K562 (cell line): ENCODE measurements at regions of chr17 and their contacts with region 1.

Region 1: GRCh38 chr17:33871720-33872540 is 383.2 kb upstream of the CCL2 start:
- DNase-seq: peak; percentile 88 to 96 (median 90)
- ATAC-seq: peak; percentile 94
- H3K4me3 ChIP-seq: no peak overlapping the region
- H3K27ac ChIP-seq: peak overlapping the region; percentile 90
- H3K4me1 ChIP-seq: peaks cover 37 to 72% of the 10 kb centered on the region in 2 experiments
- H3K27me3 ChIP-seq: no peaks in the 10 kb centered on the region
- CTCF ChIP-seq: no peak
- EP300 ChIP-seq: peak; percentile 93
- POLR2A ChIP-seq: 0 out of 2 replicates have a peak, but pooled peaks have one; percentile 30
- RAD21 ChIP-seq: peak in 1 of 2 experiments; percentile 42; a peak in 2 of 4 replicates

Region 2: GRCh38 chr17:33725675-33726271 is 146.2 kb before region 1 on chr17:
- CTCF ChIA-PET with region 1: no interaction called
- POLR2A ChIA-PET with region 1: no interaction called
- in situ Hi-C with region 1: no loop called
- intact Hi-C with region 1: no loop called
- DNase-seq: peak; percentile 66 to 75 (median 67)
- ATAC-seq: peak; percentile 85
- H3K4me3 ChIP-seq: no peak overlapping the region
- H3K27ac ChIP-seq: no peak overlapping the region
- H3K4me1 ChIP-seq: no peaks in the 10 kb centered on the region
- H3K27me3 ChIP-seq: peaks cover 0 to 7% of the 10 kb centered on the region in 2 experiments; a peak in 1 of 5 replicates
- CTCF ChIP-seq: peak; percentile 82 to 84 (median 83)
- EP300 ChIP-seq: no peak
- POLR2A ChIP-seq: no peak
- RAD21 ChIP-seq: peak; percentile 55 to 71

Region 3: DNA sequence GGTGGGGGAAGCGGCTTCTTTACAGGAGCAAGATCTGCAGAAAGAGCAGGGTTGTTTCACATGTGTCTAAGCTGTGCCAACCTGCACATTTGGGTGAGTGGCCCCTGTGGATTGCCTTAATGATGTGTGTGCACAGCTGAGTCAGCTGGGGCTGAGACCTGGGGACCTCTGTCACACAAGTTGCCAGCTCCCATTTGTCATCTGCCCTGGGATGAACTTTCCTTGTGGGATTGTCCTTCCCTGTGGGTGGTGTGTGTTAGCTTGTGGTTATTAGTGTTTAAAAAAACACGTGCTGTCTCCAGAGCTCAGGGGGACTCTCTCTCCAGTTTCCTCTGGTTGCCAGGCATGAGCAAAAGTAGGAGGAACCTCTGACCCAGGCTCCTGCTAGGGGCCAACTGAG is 17.3 kb before region 1 on chr17:
- CTCF ChIA-PET with region 1: no interaction called
- POLR2A ChIA-PET with region 1: interaction called, 10 read pairs
- in situ Hi-C with region 1: no loop called
- intact Hi-C with region 1: no loop called
- DNase-seq: no peak
- ATAC-seq: no peak
- H3K4me3 ChIP-seq: no peak overlapping the region
- H3K27ac ChIP-seq: no peak overlapping the region
- H3K4me1 ChIP-seq: peaks cover 0 to 13% of the 10 kb centered on the region in 2 experiments; a peak in 3 of 5 replicates
- H3K27me3 ChIP-seq: peaks cover 7 to 9% of the 10 kb centered on the region in 2 experiments; a peak in 3 of 5 replicates
- CTCF ChIP-seq: no peak
- EP300 ChIP-seq: no peak
- POLR2A ChIP-seq: no peak
- RAD21 ChIP-seq: no peak

Region 4: DNA sequence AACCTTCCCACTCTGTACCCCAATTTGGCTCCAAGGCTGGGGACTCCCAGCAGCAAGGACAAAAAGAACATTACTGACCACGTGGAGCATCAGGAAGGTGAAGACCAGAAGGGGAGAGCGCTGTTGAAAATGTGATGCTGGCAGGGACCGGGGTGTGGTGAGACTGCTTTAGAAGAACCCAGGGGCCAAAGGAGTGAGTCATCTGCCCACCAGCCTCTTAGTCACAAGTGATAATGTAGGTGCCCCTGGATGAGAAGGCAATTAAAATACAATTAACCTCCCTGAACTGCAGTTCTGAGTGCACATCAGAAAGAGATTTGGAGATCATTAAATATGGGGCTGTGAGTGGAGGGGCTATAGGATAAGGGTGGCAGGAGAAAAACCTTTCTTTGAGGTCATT is 16.5 kb after region 1 on chr17:
- CTCF ChIA-PET with region 1: no interaction called
- POLR2A ChIA-PET with region 1: interaction called, 10 read pairs
- in situ Hi-C with region 1: no loop called
- intact Hi-C with region 1: loop called (anchors 2 kb)
- DNase-seq: peak; percentile 54 to 61 (median 55)
- ATAC-seq: no peak; the same call in 2 of the 3 replicates
- H3K4me3 ChIP-seq: no peak overlapping the region
- H3K27ac ChIP-seq: peak overlapping the region; percentile 65
- H3K4me1 ChIP-seq: peaks cover 22 to 58% of the 10 kb centered on the region in 2 experiments; a peak in 4 of 5 replicates
- H3K27me3 ChIP-seq: no peaks in the 10 kb centered on the region
- CTCF ChIP-seq: no peak
- EP300 ChIP-seq: no peak
- POLR2A ChIP-seq: no peak
- RAD21 ChIP-seq: no peak

Region 5: DNA sequence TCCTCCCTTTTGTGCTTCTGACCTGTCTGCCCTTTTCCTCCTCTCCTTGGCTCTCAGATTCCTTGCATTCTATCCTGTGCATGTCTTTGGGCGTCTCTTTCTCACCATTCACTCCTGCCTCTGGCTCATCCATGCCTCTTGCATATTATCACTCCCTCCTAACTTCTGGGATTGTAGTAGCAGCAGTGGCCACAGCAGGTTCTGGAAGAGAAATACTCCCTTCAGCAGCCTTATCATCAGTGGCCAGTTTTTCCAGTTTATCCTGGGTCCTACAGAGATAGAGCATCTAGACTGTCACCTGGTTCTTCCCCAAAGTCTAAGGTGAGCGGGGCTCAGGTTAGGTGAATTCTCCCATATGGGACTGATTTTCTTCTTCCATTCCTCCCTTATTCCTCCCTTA is 29.2 kb after region 1 on chr17:
- CTCF ChIA-PET with region 1: no interaction called
- POLR2A ChIA-PET with region 1: interaction called, 5 read pairs
- in situ Hi-C with region 1: no loop called
- intact Hi-C with region 1: loop called (anchors 1 kb)
- DNase-seq: peak in 1 of 4 experiments; percentile 26
- ATAC-seq: no peak
- H3K4me3 ChIP-seq: no peak overlapping the region
- H3K27ac ChIP-seq: no peak overlapping the region
- H3K4me1 ChIP-seq: peaks cover 34 to 63% of the 10 kb centered on the region in 2 experiments; a peak in 4 of 5 replicates
- H3K27me3 ChIP-seq: no peaks in the 10 kb centered on the region
- CTCF ChIP-seq: no peak
- EP300 ChIP-seq: peak; percentile 23; the same call in 1 of the 2 replicates
- POLR2A ChIP-seq: no peak
- RAD21 ChIP-seq: no peak

Region 6: DNA sequence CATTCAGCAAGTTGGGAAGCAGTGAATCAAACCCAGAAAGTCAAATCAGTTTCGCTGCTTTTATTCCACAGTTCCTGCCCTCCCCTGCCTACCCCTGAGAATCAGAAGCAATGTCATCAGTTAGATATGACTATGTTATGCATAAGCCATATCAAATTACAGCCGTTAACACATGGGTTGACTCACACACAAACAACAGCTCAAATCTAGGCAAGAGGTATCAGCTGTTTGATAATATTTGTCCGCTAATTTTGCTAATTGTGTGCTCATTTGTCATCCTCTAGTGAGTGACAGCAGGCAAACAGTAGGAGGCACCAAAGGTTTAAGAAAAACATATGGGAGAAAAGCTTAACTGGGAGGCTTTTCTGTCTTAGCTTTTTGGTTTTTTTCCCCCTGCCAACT is 55.8 kb after region 1 on chr17:
- CTCF ChIA-PET with region 1: no interaction called
- POLR2A ChIA-PET with region 1: no interaction called
- in situ Hi-C with region 1: no loop called
- intact Hi-C with region 1: loop called (anchors 5 kb)
- DNase-seq: peak; percentile 47 to 57 (median 52)
- ATAC-seq: peak; percentile 41; the same call in 2 of the 3 replicates
- H3K4me3 ChIP-seq: no peak overlapping the region
- H3K27ac ChIP-seq: no peak overlapping the region; the same call in 2 of the 3 replicates
- H3K4me1 ChIP-seq: peaks cover 29 to 83% of the 10 kb centered on the region in 2 experiments; a peak in 4 of 5 replicates
- H3K27me3 ChIP-seq: no peaks in the 10 kb centered on the region
- CTCF ChIP-seq: peak; percentile 42 to 85 (median 73); a peak in 5 of 6 replicates
- EP300 ChIP-seq: no peak
- POLR2A ChIP-seq: no peak
- RAD21 ChIP-seq: peak; percentile 76 to 81

Region 7: GRCh38 chr17:34012709-34013375 is 140.9 kb after region 1 on chr17:
- CTCF ChIA-PET with region 1: no interaction called
- POLR2A ChIA-PET with region 1: no interaction called
- in situ Hi-C with region 1: no loop called
- intact Hi-C with region 1: no loop called
- DNase-seq: no peak
- ATAC-seq: no peak
- H3K4me3 ChIP-seq: no peak overlapping the region
- H3K27ac ChIP-seq: no peak overlapping the region
- H3K4me1 ChIP-seq: no peaks in the 10 kb centered on the region
- H3K27me3 ChIP-seq: peaks cover 0 to 26% of the 10 kb centered on the region in 2 experiments; a peak in 2 of 5 replicates
- CTCF ChIP-seq: no peak
- EP300 ChIP-seq: no peak
- POLR2A ChIP-seq: no peak
- RAD21 ChIP-seq: no peak